ENCODE measurements at regions of chr20 and their contacts with region 1.

Region 1: DNA sequence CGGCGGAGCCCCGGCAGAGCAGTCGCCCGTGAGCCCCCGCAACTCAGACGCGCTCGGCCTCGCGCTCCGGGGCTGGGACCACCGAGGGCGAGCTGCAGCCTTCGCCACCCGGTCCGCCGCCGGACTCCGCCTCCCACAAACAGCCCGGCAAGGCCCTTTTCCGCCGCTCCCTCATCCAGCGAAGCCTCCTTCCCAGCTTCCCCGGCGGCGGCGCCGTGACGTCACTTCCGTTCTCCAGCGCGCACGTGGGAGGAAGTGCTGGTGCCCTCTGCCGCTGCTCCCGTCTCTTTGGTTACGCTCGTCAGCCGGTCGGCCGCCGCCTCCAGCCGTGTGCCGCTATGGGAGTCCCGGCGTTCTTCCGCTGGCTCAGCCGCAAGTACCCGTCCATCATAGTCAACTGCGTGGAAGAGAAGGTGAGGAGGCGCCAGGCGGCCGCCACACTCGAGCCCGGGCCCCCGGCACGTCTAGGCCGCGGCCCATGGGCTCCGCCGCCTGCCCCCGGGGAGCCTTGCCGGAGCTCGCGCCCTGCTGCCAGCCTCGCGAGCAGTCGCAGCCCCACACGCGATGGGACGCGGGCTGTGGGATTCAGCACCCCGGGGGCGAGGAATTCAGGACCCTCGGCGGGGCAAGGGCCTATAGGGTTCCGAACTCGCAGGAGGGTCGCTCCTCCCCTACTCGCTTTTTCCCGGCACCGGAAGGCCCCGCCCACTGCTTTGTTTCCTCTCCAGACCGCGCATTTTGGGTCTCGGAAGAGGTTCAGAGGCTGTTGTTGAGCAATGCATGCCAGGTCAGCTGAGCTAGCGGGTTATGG is at the start of gene XRN2:
- DNase-seq: peak; percentile 98
- ATAC-seq: peak; percentile 93
- H3K4me3 ChIP-seq: peak within 1 kb of the TSS; percentile 79 to 88 (median 81)
- H3K27ac ChIP-seq: peak within 1 kb of the TSS; percentile 88
- H3K4me1 ChIP-seq: peaks cover 38% of the 10 kb centered on the region
- H3K27me3 ChIP-seq: no peaks in the 10 kb centered on the region; a peak in 1 of 5 replicates
- CTCF ChIP-seq: peak; percentile 72
- EP300 ChIP-seq: peak; percentile 45 to 50; a peak in 3 of 4 replicates
- POLR2A ChIP-seq: peak; percentile 95 to 99
- RAD21 ChIP-seq: peak; percentile 55
- total RNA-seq, gene XRN2: 171 and 256 TPM in 2 replicates

Region 2: DNA sequence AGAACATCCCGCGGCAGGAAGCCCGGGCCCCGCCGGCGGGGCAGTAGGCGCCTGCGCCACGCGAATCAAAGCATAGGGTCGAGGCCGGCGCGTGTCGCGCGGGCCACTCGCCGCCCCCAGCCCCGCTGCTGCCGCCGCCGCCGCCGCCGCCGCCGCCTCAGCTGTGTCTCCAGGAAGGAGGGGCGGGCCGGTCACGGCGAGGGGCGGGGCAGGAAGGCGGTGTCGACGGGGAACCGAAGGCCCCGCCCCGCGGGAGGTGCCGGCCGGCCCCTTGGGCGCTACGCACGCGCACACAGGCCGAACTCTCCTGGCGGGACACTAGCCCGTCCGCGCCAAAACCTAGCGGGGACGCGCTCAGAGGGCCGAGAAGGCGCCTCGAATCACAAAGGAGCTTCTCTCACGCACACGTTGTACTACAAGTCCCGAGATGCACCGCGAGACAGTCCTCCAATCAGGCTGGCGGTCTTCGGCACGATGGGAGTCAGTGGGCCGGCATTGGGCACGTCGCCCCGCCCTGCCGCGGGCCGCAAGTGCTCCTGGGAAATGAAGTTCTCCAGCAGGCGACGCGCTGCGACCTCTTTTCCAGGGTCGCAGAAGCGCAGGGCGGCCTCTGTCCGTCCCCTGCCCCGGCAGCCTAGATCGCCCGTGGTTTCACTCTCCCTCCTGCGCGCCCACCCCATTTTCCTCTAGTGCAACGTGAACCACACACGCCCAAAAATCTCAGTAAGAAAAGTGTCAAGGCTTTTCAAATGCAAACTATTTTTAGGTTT is 590.6 kb before region 1 on chr20 and contains the start of gene RALGAPA2:
- CTCF ChIA-PET with region 1: no interaction called
- POLR2A ChIA-PET with region 1: interaction called, 3 read pairs
- in situ Hi-C with region 1: no loop called
- intact Hi-C with region 1: loop called (anchors 5 kb)
- DNase-seq: peak; percentile 100
- ATAC-seq: peak; percentile 96
- H3K4me3 ChIP-seq: peak within 1 kb of the TSS; percentile 83 to 99 (median 94)
- H3K27ac ChIP-seq: peak within 1 kb of the TSS; percentile 77
- H3K4me1 ChIP-seq: peaks cover 34% of the 10 kb centered on the region
- H3K27me3 ChIP-seq: no peaks in the 10 kb centered on the region; a peak in 2 of 5 replicates
- CTCF ChIP-seq: peak; percentile 53
- EP300 ChIP-seq: no peak
- POLR2A ChIP-seq: peak; percentile 86 to 94
- RAD21 ChIP-seq: peak; percentile 29; the same call in 1 of the 2 replicates
- total RNA-seq, gene RALGAPA2: 17.7 and 18.3 TPM in 2 replicates

Region 3: GRCh38 chr20:21235484-21236445 is 67.5 kb before region 1 on chr20:
- CTCF ChIA-PET with region 1: interaction called, 4 read pairs
- POLR2A ChIA-PET with region 1: interaction called, 3 read pairs
- in situ Hi-C with region 1: no loop called
- intact Hi-C with region 1: loop called (anchors 5 kb)
- DNase-seq: peak; percentile 77
- ATAC-seq: peak; percentile 88
- H3K4me3 ChIP-seq: no peak overlapping the region
- H3K27ac ChIP-seq: no peak overlapping the region
- H3K4me1 ChIP-seq: peaks cover 6% of the 10 kb centered on the region; the same call in 1 of the 2 replicates
- H3K27me3 ChIP-seq: no peaks in the 10 kb centered on the region
- CTCF ChIP-seq: peak; percentile 91
- EP300 ChIP-seq: no peak
- POLR2A ChIP-seq: no peak
- RAD21 ChIP-seq: peak; percentile 79

Region 4: GRCh38 chr20:21315138-21315537 is 11.9 kb after region 1 on chr20:
- CTCF ChIA-PET with region 1: no interaction called
- POLR2A ChIA-PET with region 1: interaction called, 10 read pairs
- in situ Hi-C with region 1: no loop called
- intact Hi-C with region 1: no loop called
- DNase-seq: no peak
- ATAC-seq: no peak; the same call in 2 of the 3 replicates
- H3K4me3 ChIP-seq: no peak overlapping the region
- H3K27ac ChIP-seq: no peak overlapping the region
- H3K4me1 ChIP-seq: peaks cover 47% of the 10 kb centered on the region
- H3K27me3 ChIP-seq: no peaks in the 10 kb centered on the region
- CTCF ChIP-seq: no peak
- EP300 ChIP-seq: no peak
- POLR2A ChIP-seq: no peak
- RAD21 ChIP-seq: no peak

Region 5: GRCh38 chr20:21339499-21339898 is 36.2 kb after region 1 on chr20:
- CTCF ChIA-PET with region 1: no interaction called
- POLR2A ChIA-PET with region 1: interaction called, 11 read pairs
- in situ Hi-C with region 1: no loop called
- intact Hi-C with region 1: loop called (anchors 2 kb)
- DNase-seq: peak; percentile 83
- ATAC-seq: peak; percentile 82
- H3K4me3 ChIP-seq: no peak overlapping the region
- H3K27ac ChIP-seq: peak overlapping the region; percentile 24
- H3K4me1 ChIP-seq: peaks cover 31% of the 10 kb centered on the region
- H3K27me3 ChIP-seq: no peaks in the 10 kb centered on the region
- CTCF ChIP-seq: no peak
- EP300 ChIP-seq: peak; percentile 20 to 29; a peak in 1 of 4 replicates
- POLR2A ChIP-seq: no peak
- RAD21 ChIP-seq: no peak